Activated T-helper 1 cell treated with anti-CD3 and anti-CD28 coated beads, Interleukin-12 subunit alpha, Interleukin-12 subunit beta, Interleukin-2, Interleukin-4 antibody, amounts not matched to agents 30 ng/mL and 10 ng/mL and 1 ng/mL, durations not matched to agents 14 hours and 24 hours and 36 hours (primary cell): ENCODE measurements at regions of chr16 and their contacts with region 1.

Region 1: GRCh38 chr16:67480833-67481560 is at the start of gene ATP6V0D1:
- DNase-seq: peak; percentile 99
- H3K4me3 Mint-ChIP-seq: peak within 1 kb of the TSS; percentile 89
- H3K27ac Mint-ChIP-seq: peak within 1 kb of the TSS; percentile 97
- H3K4me1 Mint-ChIP-seq: peaks cover 17% of the 10 kb centered on the region
- H3K27me3 Mint-ChIP-seq: no peaks in the 10 kb centered on the region
- total RNA-seq, gene ATP6V0D1: 37.7 and 41.5 TPM in 2 replicates

Region 2: DNA sequence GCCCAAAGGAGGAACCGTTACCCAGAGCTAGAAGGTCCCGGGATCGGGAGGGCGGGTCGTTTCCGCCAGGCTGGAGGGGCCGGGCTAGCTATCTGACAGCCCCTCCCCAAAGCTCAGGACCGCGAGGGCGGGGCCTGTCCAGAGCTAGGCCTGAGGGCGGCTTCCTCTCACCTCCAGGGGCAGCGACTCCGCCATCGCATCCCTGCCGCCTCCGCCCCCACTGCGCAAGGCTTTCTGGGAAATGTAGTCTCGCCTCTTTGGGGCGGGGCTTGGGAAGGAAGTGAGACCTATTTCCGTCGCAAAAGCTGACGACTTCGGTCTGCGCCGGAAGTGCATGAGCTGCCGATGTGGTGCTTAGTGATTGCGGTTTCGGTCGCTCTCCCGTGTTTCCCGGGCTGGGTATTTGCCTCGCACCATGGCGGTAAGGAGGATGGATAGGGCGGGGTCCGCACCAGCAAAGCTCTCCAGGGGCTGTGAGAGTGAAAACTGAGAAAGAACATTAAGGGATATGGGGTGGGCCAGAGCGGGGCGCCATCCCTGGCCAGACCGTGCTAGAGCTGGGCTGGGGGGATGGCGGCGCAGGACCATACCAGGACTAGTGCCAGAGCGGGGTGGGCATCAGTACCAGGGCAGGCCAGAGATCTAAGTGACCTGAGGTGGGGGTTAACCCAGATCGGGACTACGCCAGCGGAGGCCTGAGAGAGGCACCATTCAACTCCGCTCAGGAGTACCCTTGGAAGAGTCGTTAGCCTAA is 254.0 kb before region 1 on chr16 and contains the start of gene TMEM208:
- intact Hi-C with region 1: loop called (anchors 1 kb)
- DNase-seq: peak; percentile 99
- H3K4me3 Mint-ChIP-seq: peak within 1 kb of the TSS; percentile 98
- H3K27ac Mint-ChIP-seq: peak within 1 kb of the TSS; percentile 94
- H3K4me1 Mint-ChIP-seq: peaks cover 43% of the 10 kb centered on the region
- H3K27me3 Mint-ChIP-seq: no peaks in the 10 kb centered on the region
- total RNA-seq, gene TMEM208: 68.5 and 72.4 TPM in 2 replicates

Region 3: GRCh38 chr16:67499106-67499505 is 18.1 kb after region 1 on chr16:
- intact Hi-C with region 1: loop called (anchors 1 kb)
- DNase-seq: no peak
- H3K4me3 Mint-ChIP-seq: no peak overlapping the region
- H3K27ac Mint-ChIP-seq: no peak overlapping the region
- H3K4me1 Mint-ChIP-seq: peaks cover 19% of the 10 kb centered on the region
- H3K27me3 Mint-ChIP-seq: no peaks in the 10 kb centered on the region

Region 4: GRCh38 chr16:67645397-67646121 is 164.6 kb after region 1 on chr16:
- intact Hi-C with region 1: loop called (anchors 1 kb)
- DNase-seq: no peak
- H3K4me3 Mint-ChIP-seq: peak overlapping the region; percentile 89
- H3K27ac Mint-ChIP-seq: peak overlapping the region; percentile 94
- H3K4me1 Mint-ChIP-seq: no peaks in the 10 kb centered on the region
- H3K27me3 Mint-ChIP-seq: no peaks in the 10 kb centered on the region

Region 5: DNA sequence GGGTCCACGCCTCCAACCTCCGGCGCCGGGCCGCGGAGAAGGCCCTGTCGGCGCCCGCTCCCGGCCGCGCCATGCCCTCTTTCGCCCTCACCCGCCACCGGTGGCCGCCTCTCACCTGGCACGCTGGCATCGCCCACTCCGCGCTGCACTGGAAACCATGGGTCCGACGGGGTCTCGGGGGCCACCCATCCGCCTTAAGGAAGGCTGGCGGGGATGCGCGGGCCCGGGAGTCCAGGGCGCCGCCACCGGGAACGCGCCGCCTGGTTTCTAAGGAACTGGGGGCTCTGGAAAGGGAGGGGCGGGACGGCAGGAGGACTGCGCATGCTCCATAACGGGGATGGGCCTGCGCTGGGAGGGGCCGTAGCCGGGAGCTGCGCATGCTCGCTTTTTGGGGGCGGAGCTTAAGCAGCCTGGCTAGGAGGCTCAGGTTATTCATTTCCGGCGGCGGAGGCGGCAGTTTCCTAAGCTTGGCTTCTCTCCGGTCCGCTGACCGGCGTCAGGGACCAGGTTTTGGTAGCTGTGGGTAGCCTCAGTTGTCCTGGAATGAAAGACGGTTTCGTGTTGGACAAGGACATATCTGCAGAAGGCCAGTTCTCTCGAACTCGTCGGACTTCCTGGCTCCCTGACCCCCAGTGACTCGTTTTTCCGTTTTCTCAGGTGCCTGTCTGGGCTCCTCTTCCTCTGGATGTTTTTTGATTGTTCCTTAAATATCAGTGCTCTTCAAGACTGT is 238.2 kb after region 1 on chr16 and contains the start of gene GFOD2:
- intact Hi-C with region 1: loop called (anchors 1 kb)
- DNase-seq: peak; percentile 97
- H3K4me3 Mint-ChIP-seq: peak within 1 kb of the TSS; percentile 96
- H3K27ac Mint-ChIP-seq: peak within 1 kb of the TSS; percentile 94
- H3K4me1 Mint-ChIP-seq: peaks cover 33% of the 10 kb centered on the region
- H3K27me3 Mint-ChIP-seq: no peaks in the 10 kb centered on the region
- total RNA-seq, gene GFOD2: 19.6 and 20.3 TPM in 2 replicates